ENCODE measurements at regions of chr6 and their contacts with region 1.

Region 1: DNA sequence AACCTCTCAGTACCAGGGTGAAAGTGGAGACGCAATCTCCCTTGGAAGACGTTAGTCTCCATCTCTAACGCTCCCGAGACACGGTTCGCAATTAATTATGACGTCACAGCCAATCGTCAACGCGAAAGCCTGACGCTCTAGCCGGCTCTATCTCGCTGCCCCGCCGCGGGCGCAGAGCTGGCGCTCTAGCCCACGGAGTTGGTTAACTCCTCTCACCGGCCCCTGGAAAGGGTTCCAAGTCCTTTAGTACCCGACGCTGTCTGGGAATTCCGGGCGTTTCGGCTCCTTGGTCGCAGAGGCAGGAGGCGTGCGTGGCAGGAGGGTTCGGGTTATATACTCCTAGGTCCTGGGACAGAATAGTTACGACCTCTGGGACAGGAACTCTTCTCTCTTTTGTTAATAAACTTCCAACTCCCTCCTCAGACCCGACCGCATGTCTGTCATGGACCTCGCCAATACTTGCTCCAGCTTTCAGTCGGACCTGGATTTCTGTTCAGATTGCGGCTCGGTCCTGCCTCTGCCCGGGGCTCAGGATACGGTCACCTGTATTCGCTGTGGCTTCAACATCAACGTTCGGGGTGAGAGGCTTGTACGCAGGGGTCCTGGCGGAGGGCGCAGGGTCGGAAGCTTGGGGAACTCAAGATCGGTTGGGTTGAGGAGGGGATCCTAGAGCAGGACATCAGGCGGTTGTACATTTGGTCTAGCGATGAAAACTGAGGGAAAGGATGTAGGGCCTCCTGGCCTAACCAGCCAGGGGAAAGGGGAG is at the start of gene POLR1H:
- DNase-seq: peak; percentile 87 to 93 (median 88)
- H3K4me3 ChIP-seq: peak within 1 kb of the TSS; percentile 62 to 96
- H3K4me3 Mint-ChIP-seq: peak within 1 kb of the TSS; percentile 96 to 99 (median 98)
- H3K27ac ChIP-seq: peak within 1 kb of the TSS; percentile 92
- H3K27ac Mint-ChIP-seq: peak within 1 kb of the TSS; percentile 97 to 100 (median 99)
- H3K4me1 ChIP-seq: peaks cover 41% of the 10 kb centered on the region
- H3K4me1 Mint-ChIP-seq: peaks cover 16 to 49% (median 29%) of the 10 kb centered on the region in 4 donors
- H3K27me3 ChIP-seq: no peaks in the 10 kb centered on the region
- H3K27me3 Mint-ChIP-seq: no peaks in the 10 kb centered on the region
- total RNA-seq, gene POLR1H: 47.2 to 50.0 TPM

Region 2: GRCh38 chr6:30075161-30075986 is 14.1 kb after region 1 on chr6 and contains the start of gene RNF39:
- CTCF ChIA-PET with region 1: interaction called, 15 read pairs
- POLR2A ChIA-PET with region 1: interaction called, 26 read pairs
- intact Hi-C with region 1: no loop called
- DNase-seq: peak in 1 of 5 donors; percentile 24
- H3K4me3 ChIP-seq: peak within 1 kb of the TSS in 1 of 2 donors; percentile 15
- H3K4me3 Mint-ChIP-seq: peak within 1 kb of the TSS; percentile 66 to 88 (median 82)
- H3K27ac ChIP-seq: no peak within 1 kb of the TSS
- H3K27ac Mint-ChIP-seq: peak within 1 kb of the TSS; percentile 8 to 83 (median 31)
- H3K4me1 ChIP-seq: peaks cover 48% of the 10 kb centered on the region
- H3K4me1 Mint-ChIP-seq: peaks cover 32 to 70% (median 51%) of the 10 kb centered on the region in 4 donors
- H3K27me3 ChIP-seq: peaks cover 4% of the 10 kb centered on the region
- H3K27me3 Mint-ChIP-seq: peaks cover 23 to 28% of the 10 kb centered on the region in 2 donors
- total RNA-seq, gene RNF39: not detected

Measured in CD4-positive, alpha-beta memory T cell (primary cell).